Activated naive CD4-positive, alpha-beta T cell treated with anti-CD3 and anti-CD28 coated beads for 36 hours (primary cell): ENCODE measurements at regions of chr11 and their contacts with region 1.

Region 1: GRCh38 chr11:62831520-62832335 is at the start of gene STX5:
- DNase-seq: peak; percentile 100
- H3K4me3 Mint-ChIP-seq: peak within 1 kb of the TSS; percentile 99
- H3K27ac Mint-ChIP-seq: peak within 1 kb of the TSS; percentile 100
- H3K4me1 Mint-ChIP-seq: peaks cover 47% of the 10 kb centered on the region
- H3K27me3 Mint-ChIP-seq: no peaks in the 10 kb centered on the region
- total RNA-seq, gene STX5: 22.7 to 23.0 TPM

Region 2: GRCh38 chr11:62805076-62805892 is 26.4 kb before region 1 on chr11 and contains the start of gene NXF1:
- CTCF ChIA-PET with region 1: no interaction called
- intact Hi-C with region 1: loop called (anchors 1 kb)
- DNase-seq: peak; percentile 93
- H3K4me3 Mint-ChIP-seq: peak within 1 kb of the TSS; percentile 95
- H3K27ac Mint-ChIP-seq: peak within 1 kb of the TSS; percentile 94
- H3K4me1 Mint-ChIP-seq: peaks cover 28% of the 10 kb centered on the region
- H3K27me3 Mint-ChIP-seq: no peaks in the 10 kb centered on the region
- total RNA-seq, gene NXF1: 44.6 to 46.0 TPM